H1 (cell line): ENCODE measurements at regions of chr5 and their contacts with region 1.

Region 1: GRCh38 chr5:179732417-179732917 is at the start of gene MAML1:
- DNase-seq: peak; percentile 99 to 100
- H3K4me3 ChIP-seq: peak within 1 kb of the TSS; percentile 64 to 80 (median 76)
- H3K27ac ChIP-seq: peak within 1 kb of the TSS; percentile 85
- H3K4me1 ChIP-seq: peaks cover 0 to 3% (median 3%) of the 10 kb centered on the region in 4 experiments; a peak in 3 of 7 replicates
- H3K27me3 ChIP-seq: no peaks in the 10 kb centered on the region
- CTCF ChIP-seq: 0 out of 4 replicates have a peak, but pooled peaks of 1 of the 3 experiments have one; percentile 1
- EP300 ChIP-seq: no peak
- POLR2A ChIP-seq: peak; percentile 52 to 85
- RAD21 ChIP-seq: no peak
- total RNA-seq, gene MAML1: 41.9 and 45.6 TPM in 2 replicates

Region 2: DNA sequence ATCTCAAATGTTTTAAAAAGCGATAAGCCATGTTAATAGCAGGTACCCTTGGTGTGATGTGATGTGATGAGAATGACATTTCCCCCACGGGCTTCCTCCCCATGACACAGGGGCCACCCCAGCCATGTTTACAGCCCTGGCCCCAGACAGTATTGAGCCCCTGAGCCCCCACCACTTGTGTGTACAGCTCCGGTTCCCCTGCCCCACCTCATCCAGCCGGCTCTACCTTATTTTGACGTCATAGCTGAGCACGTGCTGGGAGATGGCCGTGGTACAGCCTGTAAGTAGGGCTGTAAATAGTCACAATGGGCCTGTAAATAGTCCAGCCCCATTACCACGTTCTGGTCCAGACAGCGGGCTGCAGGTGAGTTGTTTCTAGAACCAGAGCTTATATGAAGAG is 84.1 kb before region 1 on chr5:
- CTCF ChIA-PET with region 1: no interaction called
- POLR2A ChIA-PET with region 1: no interaction called
- DNase-seq: no peak
- H3K4me3 ChIP-seq: no peak overlapping the region
- H3K27ac ChIP-seq: no peak overlapping the region
- H3K4me1 ChIP-seq: peaks cover 0 to 2% (median 0%) of the 10 kb centered on the region in 4 experiments; a peak in 1 of 7 replicates
- H3K27me3 ChIP-seq: no peaks in the 10 kb centered on the region
- CTCF ChIP-seq: no peak
- EP300 ChIP-seq: no peak
- POLR2A ChIP-seq: no peak
- RAD21 ChIP-seq: no peak

Region 3: GRCh38 chr5:179697993-179698934 is 34.2 kb before region 1 on chr5:
- CTCF ChIA-PET with region 1: no interaction called
- POLR2A ChIA-PET with region 1: interaction called, 60 read pairs
- DNase-seq: peak; percentile 96 to 98
- H3K4me3 ChIP-seq: peak overlapping the region; percentile 91 to 99 (median 96)
- H3K27ac ChIP-seq: peak overlapping the region; percentile 91
- H3K4me1 ChIP-seq: peaks cover 0 to 9% (median 2%) of the 10 kb centered on the region in 4 experiments; a peak in 3 of 7 replicates
- H3K27me3 ChIP-seq: no peaks in the 10 kb centered on the region
- CTCF ChIP-seq: no peak
- EP300 ChIP-seq: no peak
- POLR2A ChIP-seq: peak; percentile 74 to 82
- RAD21 ChIP-seq: no peak

Region 4: DNA sequence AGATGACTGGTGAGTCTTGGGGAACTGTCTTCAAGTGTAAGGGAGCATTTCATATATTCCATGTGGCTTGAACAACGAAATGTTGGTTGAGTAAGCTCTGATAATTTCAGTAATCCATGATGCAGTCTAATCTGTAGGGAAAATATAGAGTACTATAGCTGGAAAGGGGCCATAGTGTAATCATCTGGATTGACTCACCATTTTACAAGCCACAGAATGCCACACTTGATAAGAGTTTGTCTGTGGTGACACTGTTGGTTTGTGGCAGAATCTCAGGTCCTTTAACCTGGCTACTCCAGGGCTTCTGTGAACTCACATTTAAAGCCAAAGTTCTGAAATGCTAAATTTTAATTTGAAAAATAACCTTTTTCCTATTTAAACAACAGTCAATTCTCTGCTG is 16.2 kb before region 1 on chr5:
- CTCF ChIA-PET with region 1: no interaction called
- POLR2A ChIA-PET with region 1: interaction called, 28 read pairs
- DNase-seq: no peak
- H3K4me3 ChIP-seq: no peak overlapping the region
- H3K27ac ChIP-seq: no peak overlapping the region
- H3K4me1 ChIP-seq: no peaks in the 10 kb centered on the region
- H3K27me3 ChIP-seq: no peaks in the 10 kb centered on the region
- CTCF ChIP-seq: no peak
- EP300 ChIP-seq: no peak
- POLR2A ChIP-seq: no peak
- RAD21 ChIP-seq: no peak

Region 5: GRCh38 chr5:179749857-179750508 is 17.5 kb after region 1 on chr5:
- CTCF ChIA-PET with region 1: no interaction called
- POLR2A ChIA-PET with region 1: interaction called, 13 read pairs
- DNase-seq: no peak
- H3K4me3 ChIP-seq: no peak overlapping the region
- H3K27ac ChIP-seq: no peak overlapping the region
- H3K4me1 ChIP-seq: peaks cover 2 to 6% (median 4%) of the 10 kb centered on the region in 4 experiments
- H3K27me3 ChIP-seq: no peaks in the 10 kb centered on the region
- CTCF ChIP-seq: peak in 2 of 3 experiments; percentile 27 to 56; a peak in 2 of 4 replicates
- EP300 ChIP-seq: no peak
- POLR2A ChIP-seq: no peak
- RAD21 ChIP-seq: peak; percentile 11 to 23; a peak in 1 of 4 replicates

Region 6: GRCh38 chr5:179755022-179755421 is 22.6 kb after region 1 on chr5:
- CTCF ChIA-PET with region 1: no interaction called
- POLR2A ChIA-PET with region 1: interaction called, 13 read pairs
- DNase-seq: no peak
- H3K4me3 ChIP-seq: no peak overlapping the region
- H3K27ac ChIP-seq: no peak overlapping the region
- H3K4me1 ChIP-seq: peaks cover 5 to 7% (median 5%) of the 10 kb centered on the region in 4 experiments; a peak in 6 of 7 replicates
- H3K27me3 ChIP-seq: no peaks in the 10 kb centered on the region
- CTCF ChIP-seq: no peak
- EP300 ChIP-seq: no peak
- POLR2A ChIP-seq: no peak
- RAD21 ChIP-seq: no peak

Region 7: GRCh38 chr5:179878222-179879009 is 145.9 kb after region 1 on chr5:
- CTCF ChIA-PET with region 1: no interaction called
- POLR2A ChIA-PET with region 1: no interaction called
- DNase-seq: no peak
- H3K4me3 ChIP-seq: no peak overlapping the region
- H3K27ac ChIP-seq: no peak overlapping the region
- H3K4me1 ChIP-seq: no peaks in the 10 kb centered on the region
- H3K27me3 ChIP-seq: no peaks in the 10 kb centered on the region
- CTCF ChIP-seq: no peak
- EP300 ChIP-seq: no peak
- POLR2A ChIP-seq: no peak
- RAD21 ChIP-seq: 0 out of 4 replicates have a peak, but pooled peaks of 1 of the 2 experiments have one; percentile 15